ENCODE measurements at regions of chr12 and their contacts with region 1.

Region 1: DNA sequence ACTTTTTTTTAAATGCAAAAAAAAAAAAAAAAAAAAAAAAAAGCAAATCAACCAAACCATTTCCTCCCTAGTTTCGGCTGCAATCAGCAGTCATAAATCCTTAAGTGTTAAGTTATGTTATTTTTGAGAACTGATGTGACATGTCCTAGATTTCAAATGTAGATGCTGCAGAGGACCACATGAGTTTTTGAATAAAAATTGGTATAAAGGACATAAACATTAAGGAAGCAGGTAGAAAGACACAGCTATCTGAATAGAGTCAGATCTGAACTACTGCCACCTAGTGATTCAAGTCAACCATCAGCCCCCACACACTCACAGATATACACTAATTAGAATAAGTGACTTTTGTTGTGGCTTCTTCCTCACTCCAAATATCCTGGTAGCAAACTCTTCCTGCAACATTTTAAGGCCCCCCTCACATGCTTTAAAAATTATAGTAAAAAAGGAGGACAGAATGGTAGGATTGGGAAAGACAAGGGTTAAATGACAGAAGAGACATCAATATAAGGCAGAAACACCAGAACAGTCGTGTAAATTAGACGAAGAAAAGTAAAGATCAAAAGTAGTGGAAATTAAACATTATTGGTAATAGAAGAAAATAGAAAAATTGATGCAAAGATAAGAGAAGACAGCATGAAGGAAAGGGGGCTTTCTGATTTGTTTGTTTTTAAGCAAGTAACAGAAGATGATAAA is 394.5 kb upstream of the ATP2B1 start:
- DNase-seq: no peak
- ATAC-seq: no peak
- H3K4me3 ChIP-seq: no peak overlapping the region
- H3K27ac ChIP-seq: no peak overlapping the region
- H3K4me1 ChIP-seq: no peaks in the 10 kb centered on the region
- H3K27me3 ChIP-seq: peaks cover 0 to 1% of the 10 kb centered on the region in 2 donors

Region 2: GRCh38 chr12:89542912-89543592 is 560.1 kb before region 1 on chr12:
- intact Hi-C with region 1: loop called in 1 of 2 experiments (anchors 10 kb)
- DNase-seq: peak in 1 of 2 donors; percentile 62
- ATAC-seq: peak; percentile 78
- H3K4me3 ChIP-seq: no peak overlapping the region
- H3K27ac ChIP-seq: no peak overlapping the region
- H3K4me1 ChIP-seq: peaks cover 0 to 2% of the 10 kb centered on the region in 2 donors
- H3K27me3 ChIP-seq: no peaks in the 10 kb centered on the region